ENCODE measurements at regions of chrX and their contacts with region 1.

Region 1: GRCh38 chrX:79081895-79082512 is 62.5 kb upstream of the GPR174 start:
- DNase-seq: peak; percentile 55
- H3K4me3 Mint-ChIP-seq: peak overlapping the region; percentile 65
- H3K27ac Mint-ChIP-seq: peak overlapping the region; percentile 81
- H3K4me1 Mint-ChIP-seq: peaks cover 41% of the 10 kb centered on the region
- H3K27me3 Mint-ChIP-seq: no peaks in the 10 kb centered on the region

Region 2: DNA sequence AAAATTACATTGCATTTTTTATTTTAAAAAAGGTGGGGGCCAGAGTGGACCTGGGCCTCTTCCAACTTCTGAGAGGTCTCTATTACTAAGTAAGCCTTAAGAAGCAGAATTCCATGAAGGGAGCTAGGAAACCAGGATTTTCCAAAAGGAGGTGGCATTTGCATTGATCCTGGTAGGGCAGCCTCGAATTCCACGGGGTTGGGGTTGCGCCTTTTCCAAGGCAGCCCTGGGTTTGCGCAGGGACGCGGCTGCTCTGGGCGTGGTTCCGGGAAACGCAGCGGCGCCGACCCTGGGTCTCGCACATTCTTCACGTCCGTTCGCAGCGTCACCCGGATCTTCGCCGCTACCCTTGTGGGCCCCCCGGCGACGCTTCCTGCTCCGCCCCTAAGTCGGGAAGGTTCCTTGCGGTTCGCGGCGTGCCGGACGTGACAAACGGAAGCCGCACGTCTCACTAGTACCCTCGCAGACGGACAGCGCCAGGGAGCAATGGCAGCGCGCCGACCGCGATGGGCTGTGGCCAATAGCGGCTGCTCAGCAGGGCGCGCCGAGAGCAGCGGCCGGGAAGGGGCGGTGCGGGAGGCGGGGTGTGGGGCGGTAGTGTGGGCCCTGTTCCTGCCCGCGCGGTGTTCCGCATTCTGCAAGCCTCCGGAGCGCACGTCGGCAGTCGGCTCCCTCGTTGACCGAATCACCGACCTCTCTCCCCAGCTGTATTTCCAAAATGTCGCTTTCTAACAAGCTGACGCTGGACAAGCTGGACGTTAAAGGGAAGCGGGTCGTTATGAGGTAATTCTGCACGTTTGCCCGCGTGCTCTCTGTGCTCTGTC is 978.2 kb before region 1 on chrX and contains the start of gene PGK1:
- CTCF ChIA-PET with region 1: no interaction called
- intact Hi-C with region 1: loop called (anchors 10 kb)
- DNase-seq: peak; percentile 95
- H3K4me3 Mint-ChIP-seq: peak within 1 kb of the TSS; percentile 95
- H3K27ac Mint-ChIP-seq: peak within 1 kb of the TSS; percentile 92
- H3K4me1 Mint-ChIP-seq: peaks cover 28% of the 10 kb centered on the region
- H3K27me3 Mint-ChIP-seq: no peaks in the 10 kb centered on the region
- total RNA-seq, gene PGK1: 744 to 766 TPM

Region 3: DNA sequence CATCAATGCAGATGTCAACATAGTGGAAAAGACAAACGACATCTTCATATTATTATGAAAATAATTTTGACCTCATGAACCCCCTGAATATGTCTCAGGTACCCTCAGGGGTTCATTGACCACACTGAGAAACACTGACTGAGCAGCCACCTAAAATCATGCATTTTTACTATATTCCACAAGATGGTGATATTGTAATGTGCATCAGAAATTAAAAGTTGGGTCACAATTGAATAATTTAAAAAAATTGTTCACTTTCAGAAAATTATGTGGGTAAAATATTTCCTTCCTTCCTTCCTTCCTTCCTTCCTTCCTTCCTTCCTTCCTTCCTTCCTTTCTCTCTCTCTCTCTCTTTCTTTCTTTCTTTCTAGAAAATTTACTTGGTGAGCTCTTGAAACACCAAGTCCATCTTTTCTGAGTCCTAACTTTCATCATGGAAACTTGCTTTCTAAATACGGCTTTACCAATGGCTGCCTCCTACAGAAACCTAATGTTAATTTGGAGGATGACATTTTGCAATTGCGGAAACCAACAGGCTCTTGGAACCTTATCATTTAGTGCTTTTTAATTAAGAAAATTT is 526.5 kb before region 1 on chrX:
- CTCF ChIA-PET with region 1: interaction called, 10 read pairs
- intact Hi-C with region 1: loop called (anchors 1 kb)
- DNase-seq: no peak
- H3K4me3 Mint-ChIP-seq: no peak overlapping the region
- H3K27ac Mint-ChIP-seq: no peak overlapping the region
- H3K4me1 Mint-ChIP-seq: peaks cover 2% of the 10 kb centered on the region
- H3K27me3 Mint-ChIP-seq: no peaks in the 10 kb centered on the region

Region 4: DNA sequence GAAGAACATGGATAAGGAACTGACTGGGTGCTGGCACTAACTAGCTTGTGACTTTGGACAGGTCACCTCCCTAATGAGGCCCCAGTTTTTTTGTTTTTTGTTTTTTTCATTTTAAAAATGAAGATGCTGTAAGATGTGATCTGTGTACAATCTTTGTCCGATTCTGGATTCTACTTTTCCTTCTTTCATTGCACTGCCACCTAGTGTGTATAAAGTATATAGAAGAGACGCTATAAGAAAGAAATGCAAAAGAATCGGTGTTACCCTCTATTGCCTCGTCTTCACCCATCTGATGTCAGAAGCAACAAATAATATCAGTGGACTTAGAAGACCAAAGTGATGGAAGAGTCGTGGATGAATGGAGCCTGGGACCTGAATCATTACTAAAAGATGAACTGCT is 195.5 kb before region 1 on chrX:
- CTCF ChIA-PET with region 1: interaction called, 6 read pairs
- intact Hi-C with region 1: loop called (anchors 5 kb)
- DNase-seq: no peak
- H3K4me3 Mint-ChIP-seq: no peak overlapping the region
- H3K27ac Mint-ChIP-seq: no peak overlapping the region
- H3K4me1 Mint-ChIP-seq: peaks cover 9% of the 10 kb centered on the region
- H3K27me3 Mint-ChIP-seq: no peaks in the 10 kb centered on the region

Region 5: DNA sequence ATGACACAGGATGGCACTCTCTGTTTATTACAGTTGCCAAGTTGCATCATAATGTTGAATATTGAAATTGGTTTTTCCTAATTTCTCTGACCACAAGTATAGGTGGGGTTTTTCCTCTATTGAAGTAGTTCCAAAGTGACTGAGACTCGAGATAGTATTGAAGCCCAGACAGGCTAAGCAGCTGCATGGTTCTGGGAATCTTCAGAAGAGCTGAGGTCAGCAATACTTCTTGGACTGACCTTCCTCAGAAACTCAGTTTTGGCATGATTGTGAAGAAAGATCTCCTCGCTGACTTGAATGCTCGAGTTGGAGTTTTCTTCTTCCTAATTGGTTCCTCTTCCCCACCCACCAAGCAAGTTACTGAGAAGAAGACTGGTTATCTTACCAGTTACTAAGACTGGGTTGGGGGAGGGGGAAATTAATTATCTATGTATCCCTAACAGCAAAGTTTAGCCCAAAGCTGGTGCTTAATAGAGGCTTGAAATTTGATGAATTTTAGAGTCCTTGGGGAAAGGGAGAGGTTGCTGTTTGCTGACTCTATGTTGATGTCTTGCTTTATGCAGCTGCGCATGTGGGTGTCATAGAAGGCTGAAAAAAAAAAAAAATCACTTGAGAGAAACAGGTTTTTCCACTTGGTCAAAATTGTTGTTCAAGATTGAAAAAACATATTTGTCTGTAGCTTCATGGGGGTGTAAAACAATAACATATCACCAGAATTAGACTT is 45.7 kb before region 1 on chrX:
- CTCF ChIA-PET with region 1: interaction called, 3 read pairs
- intact Hi-C with region 1: loop called (anchors 1 kb)
- DNase-seq: no peak
- H3K4me3 Mint-ChIP-seq: peak overlapping the region; percentile 36
- H3K27ac Mint-ChIP-seq: no peak overlapping the region
- H3K4me1 Mint-ChIP-seq: peaks cover 42% of the 10 kb centered on the region
- H3K27me3 Mint-ChIP-seq: no peaks in the 10 kb centered on the region

Region 6: GRCh38 chrX:79366873-79367749 is 285.1 kb after region 1 on chrX and contains the start of gene ITM2A:
- CTCF ChIA-PET with region 1: no interaction called
- intact Hi-C with region 1: loop called (anchors 5 kb)
- DNase-seq: peak; percentile 76
- H3K4me3 Mint-ChIP-seq: peak within 1 kb of the TSS; percentile 86
- H3K27ac Mint-ChIP-seq: peak within 1 kb of the TSS; percentile 93
- H3K4me1 Mint-ChIP-seq: peaks cover 39% of the 10 kb centered on the region
- H3K27me3 Mint-ChIP-seq: no peaks in the 10 kb centered on the region
- total RNA-seq, gene ITM2A: 99.5 to 116 TPM

Measured in activated naive CD4-positive, alpha-beta T cell treated with anti-CD3 and anti-CD28 coated beads for 36 hours (primary cell).